ENCODE measurements at regions of chr3 and their contacts with region 1.

Region 1: DNA sequence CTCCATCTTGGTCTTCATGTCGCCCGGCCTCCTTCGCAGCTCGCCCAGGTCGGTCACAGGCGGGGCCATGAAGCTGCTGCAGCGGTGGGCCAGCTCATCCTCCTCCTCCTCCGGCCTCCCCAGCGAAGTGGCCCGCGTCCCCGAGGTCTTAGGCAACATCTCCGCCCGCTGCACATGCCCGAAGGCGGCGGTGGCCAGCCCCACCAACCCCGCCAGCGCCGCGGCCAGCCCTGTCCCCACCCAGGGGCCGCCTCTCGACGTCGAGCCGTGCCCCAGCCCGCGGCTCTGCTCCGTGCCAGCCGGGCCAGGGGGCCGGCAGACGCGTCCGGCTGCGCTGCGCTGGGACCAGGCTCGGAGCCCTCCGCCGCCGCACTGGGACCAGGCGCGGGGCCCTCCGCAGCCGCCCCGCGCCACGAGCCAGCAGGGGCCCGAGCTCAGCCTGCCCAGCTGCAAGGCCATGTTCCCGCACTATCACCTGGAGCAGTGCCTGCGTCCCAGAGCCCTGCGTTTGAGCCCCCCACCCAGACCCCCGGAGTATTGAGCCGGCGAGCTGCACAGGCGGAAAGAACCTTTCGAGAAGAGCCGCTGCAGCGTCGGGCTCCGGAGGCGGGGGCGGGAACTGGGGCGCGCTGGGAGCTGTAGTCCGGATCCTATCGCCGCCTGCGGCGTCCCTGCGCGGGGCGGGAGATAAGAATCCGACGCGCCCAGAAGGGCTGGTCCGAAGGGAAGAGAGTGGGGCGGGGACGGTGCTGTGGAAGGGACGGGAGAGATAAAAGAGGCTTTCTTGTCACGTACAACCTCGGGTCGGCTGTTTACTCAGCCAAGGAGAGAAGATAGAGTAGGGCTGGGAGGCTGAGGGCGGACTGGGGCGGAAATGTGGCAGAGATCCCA is at the start of gene CPOX:
- DNase-seq: peak; percentile 94
- ATAC-seq: peak; percentile 96 to 98
- total RNA-seq, gene CPOX: 9.2 to 12.7 TPM

Region 2: GRCh38 chr3:98223907-98224672 is 369.2 kb before region 1 on chr3:
- intact Hi-C with region 1: no loop called
- DNase-seq: no peak
- ATAC-seq: no peak

Region 3: GRCh38 chr3:98322101-98322500 is 271.2 kb before region 1 on chr3:
- intact Hi-C with region 1: no loop called
- DNase-seq: no peak
- ATAC-seq: no peak

Region 4: DNA sequence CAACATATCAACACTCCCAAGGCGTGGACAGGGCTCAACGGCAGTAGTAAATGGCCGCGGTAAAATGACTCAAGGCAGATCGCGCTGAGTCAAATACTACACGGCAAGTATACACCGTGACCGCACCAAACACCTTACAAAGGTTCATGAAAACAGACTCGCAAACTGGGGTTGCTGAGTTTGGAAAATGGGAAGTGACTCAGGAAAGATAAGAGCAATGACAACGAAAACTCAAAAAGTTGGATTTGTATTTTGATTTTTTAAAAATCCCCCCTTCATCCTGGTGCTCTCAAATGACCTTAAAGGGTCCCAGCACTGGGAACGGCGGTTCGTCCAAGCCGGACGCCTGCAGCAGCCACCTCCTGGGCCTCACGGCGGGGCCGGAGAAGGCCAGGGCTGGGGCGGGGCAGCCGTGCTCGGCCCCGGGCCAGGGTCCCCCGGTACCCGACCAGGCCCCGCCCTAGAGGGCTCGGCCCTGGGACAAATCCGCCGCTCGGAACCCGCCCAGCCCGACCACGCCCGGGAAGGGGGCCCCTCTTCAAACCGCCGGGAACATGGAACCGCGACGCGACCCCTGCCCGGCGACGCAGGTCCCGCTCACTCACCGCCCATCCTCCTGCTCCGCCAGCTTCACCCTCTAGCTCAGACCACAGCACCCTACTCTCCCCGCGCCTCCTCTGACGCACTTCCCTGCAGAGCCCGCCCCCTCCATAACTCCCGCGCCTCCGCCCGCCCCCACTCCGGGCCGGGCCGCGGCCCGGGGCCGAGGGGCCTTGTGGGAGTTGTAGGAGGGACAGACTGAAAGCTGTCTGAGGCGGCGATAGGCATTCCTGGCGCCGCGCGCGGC is 70.8 kb before region 1 on chr3 and contains the start of gene CLDND1:
- intact Hi-C with region 1: loop called in 1 of 2 experiments (anchors 10 kb)
- DNase-seq: peak; percentile 98
- ATAC-seq: peak; percentile 99 to 100
- total RNA-seq, gene CLDND1: 73.3 to 88.5 TPM

Region 5: GRCh38 chr3:98994128-98994762 is 401.0 kb after region 1 on chr3:
- intact Hi-C with region 1: loop called in 1 of 2 experiments (anchors 5 kb)
- DNase-seq: no peak
- ATAC-seq: peak; percentile 27 to 63